PC-3 (cell line): ENCODE measurements at regions of chr19 and their contacts with region 1.

Region 1: GRCh38 chr19:17794731-17795536 is at the start of gene B3GNT3:
- DNase-seq: peak; percentile 94
- ATAC-seq: peak; percentile 15
- H3K4me3 ChIP-seq: peak within 1 kb of the TSS; percentile 84
- H3K27ac ChIP-seq: peak within 1 kb of the TSS; percentile 99
- H3K4me1 ChIP-seq: peaks cover 58% of the 10 kb centered on the region
- H3K27me3 ChIP-seq: no peaks in the 10 kb centered on the region
- CTCF ChIP-seq: no peak
- total RNA-seq, gene B3GNT3: 39.5 and 41.7 TPM in 2 replicates

Region 2: DNA sequence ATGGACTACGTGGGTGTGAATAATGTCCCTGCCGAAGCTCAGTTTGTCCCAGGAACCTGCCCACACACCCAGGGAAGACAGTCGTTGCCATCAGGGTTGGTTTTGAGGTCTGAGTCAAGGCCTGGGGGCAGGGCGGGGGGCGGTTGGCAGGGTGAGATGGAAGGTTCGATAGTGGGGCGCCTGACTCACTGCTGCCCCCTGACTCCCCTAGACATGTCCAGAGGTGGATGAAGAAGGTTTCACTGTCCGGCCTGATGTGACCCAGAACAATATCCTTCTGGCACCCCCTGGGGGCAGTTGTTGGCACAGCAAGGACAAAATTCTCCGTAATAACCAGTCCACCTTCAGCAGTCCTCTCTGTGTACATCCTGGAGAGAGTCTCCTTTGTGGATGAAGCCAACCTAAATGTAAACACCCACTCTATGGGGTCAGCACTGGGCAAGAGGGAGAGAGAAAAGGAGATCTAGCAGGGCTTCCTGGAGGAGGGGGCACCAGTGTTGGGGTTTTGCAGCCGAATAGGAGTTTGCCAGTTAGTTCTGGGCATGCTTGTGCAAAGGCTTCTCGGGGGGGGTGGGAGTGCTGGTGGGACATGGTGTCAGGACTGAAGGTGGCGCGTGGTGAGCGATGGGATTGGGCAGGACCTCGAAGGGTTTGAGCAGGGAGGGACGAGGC is 19.6 kb before region 1 on chr19:
- CTCF ChIA-PET with region 1: no interaction called
- POLR2A ChIA-PET with region 1: no interaction called
- intact Hi-C with region 1: loop called (anchors 2 kb)
- DNase-seq: peak; percentile 74
- ATAC-seq: peak; percentile 4; the same call in 1 of the 2 replicates
- H3K4me3 ChIP-seq: no peak overlapping the region
- H3K27ac ChIP-seq: no peak overlapping the region
- H3K4me1 ChIP-seq: peaks cover 23% of the 10 kb centered on the region
- H3K27me3 ChIP-seq: no peaks in the 10 kb centered on the region
- CTCF ChIP-seq: peak; percentile 86

Region 3: GRCh38 chr19:17817668-17818363 is 22.9 kb after region 1 on chr19:
- CTCF ChIA-PET with region 1: no interaction called
- POLR2A ChIA-PET with region 1: no interaction called
- intact Hi-C with region 1: no loop called
- DNase-seq: no peak
- ATAC-seq: no peak
- H3K4me3 ChIP-seq: no peak overlapping the region
- H3K27ac ChIP-seq: no peak overlapping the region
- H3K4me1 ChIP-seq: no peaks in the 10 kb centered on the region
- H3K27me3 ChIP-seq: no peaks in the 10 kb centered on the region
- CTCF ChIP-seq: no peak

Region 4: GRCh38 chr19:17830567-17831418 is 35.9 kb after region 1 on chr19:
- CTCF ChIA-PET with region 1: no interaction called
- POLR2A ChIA-PET with region 1: interaction called, 3 read pairs
- intact Hi-C with region 1: loop called (anchors 5 kb)
- DNase-seq: peak; percentile 94
- ATAC-seq: peak; percentile 89
- H3K4me3 ChIP-seq: peak overlapping the region; percentile 93
- H3K27ac ChIP-seq: peak overlapping the region; percentile 47
- H3K4me1 ChIP-seq: peaks cover 10% of the 10 kb centered on the region; the same call in 1 of the 2 replicates
- H3K27me3 ChIP-seq: no peaks in the 10 kb centered on the region
- CTCF ChIP-seq: no peak

Region 5: DNA sequence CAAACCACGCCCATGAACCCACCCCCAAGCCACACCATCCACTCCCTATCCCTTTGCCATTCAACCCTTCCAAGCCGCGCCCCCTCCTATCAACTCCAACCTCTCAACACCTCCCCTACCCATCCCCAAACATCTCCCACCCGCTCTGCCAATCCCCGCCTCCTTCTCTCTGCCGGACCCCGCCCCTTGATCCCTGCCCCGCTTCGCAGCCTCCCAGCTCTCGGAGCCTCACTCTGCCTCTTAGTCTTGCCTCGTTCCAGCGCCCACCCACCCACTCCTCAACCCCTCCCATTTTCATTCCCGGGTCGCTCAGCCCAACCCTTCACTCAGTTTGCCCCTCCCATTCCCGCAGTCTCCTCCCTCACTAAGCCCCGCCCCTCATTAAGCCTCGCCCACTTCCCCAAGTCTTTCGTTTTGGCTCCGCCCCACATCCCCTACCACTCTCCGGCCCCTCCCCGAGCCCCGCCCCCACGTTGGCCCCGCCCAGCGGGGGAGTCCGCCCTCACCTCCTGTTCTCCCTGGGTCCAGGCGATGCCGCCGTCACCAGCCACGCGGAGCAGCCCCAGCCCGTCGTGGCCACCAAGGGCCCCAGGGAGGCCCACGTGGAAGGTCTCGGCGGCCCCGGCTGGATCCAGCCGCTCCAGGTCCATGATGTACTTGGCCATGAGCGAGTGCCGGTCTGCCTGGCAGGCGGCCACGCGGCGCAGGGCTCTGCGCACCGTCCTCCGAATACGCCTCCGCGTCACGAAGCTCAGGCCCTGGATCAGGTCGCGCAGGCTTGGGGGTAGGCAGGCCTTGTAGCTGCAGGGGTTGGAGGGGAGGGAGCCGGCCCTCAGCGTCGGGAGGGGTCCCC is 47.1 kb after region 1 on chr19:
- CTCF ChIA-PET with region 1: no interaction called
- POLR2A ChIA-PET with region 1: interaction called, 3 read pairs
- intact Hi-C with region 1: loop called (anchors 1 kb)
- DNase-seq: peak; percentile 97
- ATAC-seq: peak; percentile 85
- H3K4me3 ChIP-seq: peak overlapping the region; percentile 76
- H3K27ac ChIP-seq: peak overlapping the region; percentile 51
- H3K4me1 ChIP-seq: peaks cover 19% of the 10 kb centered on the region
- H3K27me3 ChIP-seq: no peaks in the 10 kb centered on the region
- CTCF ChIP-seq: no peak

Region 6: DNA sequence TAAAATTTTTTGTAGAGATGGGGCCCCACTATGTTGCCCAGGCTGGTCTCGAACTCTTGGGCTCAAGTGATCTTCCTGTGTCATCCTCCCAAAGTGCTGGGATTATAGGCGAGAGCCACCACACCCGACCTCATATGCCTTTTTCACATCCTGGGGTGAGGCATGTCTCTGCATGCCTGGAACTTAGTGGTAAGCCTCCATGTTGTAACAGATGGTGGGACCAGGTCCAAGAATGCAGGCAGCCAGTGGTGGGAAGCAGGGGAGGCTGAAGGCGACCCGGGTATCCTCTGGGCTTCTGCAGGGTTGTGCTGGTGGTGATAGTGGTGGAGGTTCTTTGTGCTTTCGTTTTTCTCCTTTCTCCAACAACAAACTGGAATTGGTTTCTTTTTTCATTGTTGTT is 107.8 kb after region 1 on chr19:
- CTCF ChIA-PET with region 1: no interaction called
- POLR2A ChIA-PET with region 1: no interaction called
- intact Hi-C with region 1: no loop called
- DNase-seq: no peak
- ATAC-seq: no peak
- H3K4me3 ChIP-seq: no peak overlapping the region
- H3K27ac ChIP-seq: no peak overlapping the region
- H3K4me1 ChIP-seq: no peaks in the 10 kb centered on the region
- H3K27me3 ChIP-seq: peaks cover 24% of the 10 kb centered on the region
- CTCF ChIP-seq: no peak